Panc1 (cell line): ENCODE measurements at regions of chr11 and their contacts with region 1.

Region 1: GRCh38 chr11:65165410-65166317 is 4.4 kb upstream of the SPDYC start:
- DNase-seq: no peak
- ATAC-seq: 0 out of 2 replicates have a peak, but pooled peaks have one; percentile 43
- H3K4me3 ChIP-seq: peak overlapping the region; percentile 22 to 43
- H3K27ac ChIP-seq: peak overlapping the region; percentile 78
- H3K4me1 ChIP-seq: 0 out of 2 replicates have a peak, but pooled peaks cover 10% of the 10 kb centered on the region
- H3K27me3 ChIP-seq: no peaks in the 10 kb centered on the region
- CTCF ChIP-seq: no peak

Region 2: DNA sequence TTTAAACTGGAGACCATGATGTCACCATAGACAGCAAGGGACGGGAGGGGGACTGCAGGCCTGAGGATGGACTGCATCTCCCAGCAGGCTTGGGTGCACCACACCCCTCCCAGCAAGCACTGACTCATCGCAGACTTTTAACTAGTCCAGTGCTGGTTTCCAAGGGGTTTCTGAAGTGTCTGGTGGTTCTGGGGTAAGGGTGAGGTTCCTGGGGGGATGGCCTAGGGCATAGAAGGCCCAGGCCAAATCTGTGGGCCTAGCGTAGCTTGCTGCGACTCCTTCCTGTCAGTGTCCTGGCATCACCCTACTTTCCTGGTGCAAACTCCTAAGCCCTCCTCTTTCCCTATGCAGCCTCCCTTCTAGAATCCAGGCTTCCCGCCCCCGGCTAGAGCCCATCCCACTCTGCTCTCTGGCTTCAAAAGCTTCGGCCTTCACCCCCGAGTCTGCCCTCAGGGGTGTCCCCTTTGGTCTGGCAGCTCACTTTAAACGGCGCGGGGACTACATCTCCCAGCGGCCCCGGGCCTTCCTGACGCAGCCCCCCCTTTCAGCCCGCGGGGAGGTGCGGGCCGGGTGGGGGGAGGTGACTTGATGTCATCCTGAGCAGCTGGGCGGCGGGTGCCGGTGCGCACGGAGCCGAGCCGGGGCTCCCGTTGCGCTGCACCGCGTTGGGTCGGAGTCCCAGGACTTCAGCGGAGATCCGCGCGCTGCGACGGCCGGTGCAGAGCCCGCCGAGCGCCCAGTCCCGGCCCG is 241.4 kb before region 1 on chr11 and contains the start of gene PPP2R5B:
- CTCF ChIA-PET with region 1: no interaction called
- POLR2A ChIA-PET with region 1: interaction called, 16 read pairs
- in situ Hi-C with region 1: no loop called
- intact Hi-C with region 1: no loop called
- DNase-seq: peak; percentile 83
- ATAC-seq: peak; percentile 97
- H3K4me3 ChIP-seq: peak within 1 kb of the TSS; percentile 73 to 90
- H3K27ac ChIP-seq: peak within 1 kb of the TSS; percentile 83
- H3K4me1 ChIP-seq: peaks cover 8% of the 10 kb centered on the region; the same call in 1 of the 2 replicates
- H3K27me3 ChIP-seq: no peaks in the 10 kb centered on the region
- CTCF ChIP-seq: no peak
- total RNA-seq, gene PPP2R5B: 14.0 TPM

Region 3: GRCh38 chr11:65069217-65069616 is 96.4 kb before region 1 on chr11:
- CTCF ChIA-PET with region 1: no interaction called
- POLR2A ChIA-PET with region 1: no interaction called
- in situ Hi-C with region 1: no loop called
- intact Hi-C with region 1: no loop called
- DNase-seq: no peak
- ATAC-seq: no peak
- H3K4me3 ChIP-seq: no peak overlapping the region
- H3K27ac ChIP-seq: no peak overlapping the region
- H3K4me1 ChIP-seq: no peaks in the 10 kb centered on the region
- H3K27me3 ChIP-seq: no peaks in the 10 kb centered on the region
- CTCF ChIP-seq: no peak

Region 4: DNA sequence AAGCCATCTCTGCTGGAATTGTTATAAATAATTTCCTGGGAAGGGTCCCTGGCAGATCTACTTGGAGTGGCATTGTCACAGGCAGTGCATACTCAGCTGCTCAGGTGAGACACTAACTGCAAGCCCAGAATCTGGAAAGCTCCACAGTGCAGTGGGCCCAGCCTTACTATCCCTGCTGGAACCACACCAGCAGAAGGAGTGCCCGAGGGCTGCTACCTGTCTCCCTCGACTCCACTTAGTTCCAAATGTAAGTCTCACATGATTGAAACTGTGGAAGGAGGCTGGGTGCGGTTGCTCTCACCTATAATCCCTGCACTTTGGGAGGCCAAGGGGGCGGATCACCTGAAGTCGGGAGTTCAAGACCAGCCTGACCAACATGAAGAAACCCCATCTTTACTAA is 17.0 kb before region 1 on chr11:
- CTCF ChIA-PET with region 1: interaction called, 8 read pairs
- POLR2A ChIA-PET with region 1: interaction called, 11 read pairs
- in situ Hi-C with region 1: no loop called
- intact Hi-C with region 1: no loop called
- DNase-seq: no peak
- ATAC-seq: no peak
- H3K4me3 ChIP-seq: no peak overlapping the region
- H3K27ac ChIP-seq: no peak overlapping the region
- H3K4me1 ChIP-seq: peaks cover 13% of the 10 kb centered on the region
- H3K27me3 ChIP-seq: no peaks in the 10 kb centered on the region
- CTCF ChIP-seq: no peak